Activated naive CD4-positive, alpha-beta T cell treated with anti-CD3 and anti-CD28 coated beads for 36 hours (primary cell): ENCODE measurements at regions of chr20 and their contacts with region 1.

Region 1: GRCh38 chr20:34129518-34130162 is 17.6 kb upstream of the EIF2S2 start:
- DNase-seq: peak; percentile 66
- H3K4me3 Mint-ChIP-seq: no peak overlapping the region
- H3K27ac Mint-ChIP-seq: no peak overlapping the region
- H3K4me1 Mint-ChIP-seq: peaks cover 8% of the 10 kb centered on the region
- H3K27me3 Mint-ChIP-seq: no peaks in the 10 kb centered on the region

Region 2: GRCh38 chr20:33450867-33451266 is 678.8 kb before region 1 on chr20:
- CTCF ChIA-PET with region 1: no interaction called
- intact Hi-C with region 1: loop called (anchors 2 kb)
- DNase-seq: no peak
- H3K4me3 Mint-ChIP-seq: no peak overlapping the region
- H3K27ac Mint-ChIP-seq: no peak overlapping the region
- H3K4me1 Mint-ChIP-seq: no peaks in the 10 kb centered on the region
- H3K27me3 Mint-ChIP-seq: no peaks in the 10 kb centered on the region

Region 3: DNA sequence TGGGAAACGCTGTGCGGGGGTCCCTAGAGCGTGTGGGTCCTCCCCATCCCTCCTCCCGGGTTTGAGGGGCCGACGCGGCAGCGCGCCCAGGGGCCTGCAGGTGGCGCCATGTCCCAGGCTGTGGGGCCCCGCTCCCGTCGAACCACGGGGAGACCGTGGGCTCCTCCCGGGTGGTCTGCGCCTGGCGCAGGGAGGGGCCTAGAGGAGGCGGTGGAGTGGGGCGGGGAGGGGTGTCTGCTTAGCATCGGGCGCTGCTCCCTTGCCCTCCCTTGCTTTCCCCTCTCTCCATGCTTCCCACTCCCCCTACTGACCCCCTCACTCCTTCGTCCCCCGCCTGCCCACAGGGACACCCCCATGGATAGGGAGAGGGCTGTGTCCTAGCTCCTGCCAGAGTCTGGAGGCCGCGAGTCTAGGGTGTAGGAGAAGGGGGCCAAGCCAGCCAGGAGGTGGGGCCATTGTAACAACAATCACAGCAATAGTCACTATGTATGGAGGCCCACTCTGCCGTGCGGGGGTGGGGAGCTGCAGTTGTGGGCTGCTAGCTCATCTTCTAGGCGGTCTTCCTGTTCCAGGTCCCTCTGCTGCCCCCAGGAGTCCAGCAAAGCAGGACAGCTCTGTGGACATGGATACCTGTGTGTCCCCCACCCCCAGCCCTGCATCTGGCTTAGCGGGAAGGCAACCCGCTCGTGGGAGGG is 266.8 kb before region 1 on chr20:
- CTCF ChIA-PET with region 1: no interaction called
- intact Hi-C with region 1: loop called (anchors 1 kb)
- DNase-seq: peak; percentile 57
- H3K4me3 Mint-ChIP-seq: no peak overlapping the region
- H3K27ac Mint-ChIP-seq: no peak overlapping the region
- H3K4me1 Mint-ChIP-seq: peaks cover 19% of the 10 kb centered on the region
- H3K27me3 Mint-ChIP-seq: no peaks in the 10 kb centered on the region

Region 4: DNA sequence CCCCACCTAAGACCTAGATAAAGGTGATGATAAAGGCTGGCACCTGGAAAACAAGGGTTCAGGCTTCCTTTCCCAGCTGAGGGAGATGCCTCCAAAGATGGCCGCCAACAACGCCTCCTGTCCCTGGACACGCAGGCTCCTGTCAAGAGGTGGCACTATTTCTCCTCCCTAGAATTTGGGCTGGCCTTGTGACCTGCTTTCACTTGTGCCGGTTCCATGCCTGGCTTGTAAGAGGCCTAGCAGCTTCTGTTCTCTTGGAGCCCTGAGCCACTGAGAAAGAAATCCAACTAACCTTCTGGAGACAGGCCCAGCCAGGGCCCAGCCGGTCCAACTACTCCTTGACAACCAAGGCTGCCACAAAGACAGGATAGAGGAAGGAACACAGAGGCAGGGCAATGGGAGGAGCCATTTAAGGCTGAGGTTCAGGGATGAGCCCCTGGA is 196.2 kb before region 1 on chr20:
- CTCF ChIA-PET with region 1: interaction called, 8 read pairs
- intact Hi-C with region 1: loop called (anchors 1 kb)
- DNase-seq: peak; percentile 83
- H3K4me3 Mint-ChIP-seq: no peak overlapping the region
- H3K27ac Mint-ChIP-seq: no peak overlapping the region
- H3K4me1 Mint-ChIP-seq: no peaks in the 10 kb centered on the region
- H3K27me3 Mint-ChIP-seq: no peaks in the 10 kb centered on the region

Region 5: GRCh38 chr20:34069341-34070078 is 60.1 kb before region 1 on chr20:
- CTCF ChIA-PET with region 1: interaction called, 9 read pairs
- intact Hi-C with region 1: loop called (anchors 1 kb)
- DNase-seq: peak; percentile 72
- H3K4me3 Mint-ChIP-seq: no peak overlapping the region
- H3K27ac Mint-ChIP-seq: no peak overlapping the region
- H3K4me1 Mint-ChIP-seq: peaks cover 28% of the 10 kb centered on the region
- H3K27me3 Mint-ChIP-seq: no peaks in the 10 kb centered on the region